H1 (cell line): ENCODE measurements at regions of chr4 and their contacts with region 1.

Region 1: GRCh38 chr4:53929955-53930798 is 134.2 kb downstream of the CHIC2 start:
- DNase-seq: peak; percentile 49 to 65
- H3K4me3 ChIP-seq: no peak overlapping the region
- H3K27ac ChIP-seq: no peak overlapping the region
- H3K4me1 ChIP-seq: no peaks in the 10 kb centered on the region
- H3K27me3 ChIP-seq: no peaks in the 10 kb centered on the region; a peak in 1 of 7 replicates
- CTCF ChIP-seq: peak; percentile 68 to 95 (median 83)
- EP300 ChIP-seq: no peak
- POLR2A ChIP-seq: no peak
- RAD21 ChIP-seq: peak; percentile 90 to 91

Region 2: DNA sequence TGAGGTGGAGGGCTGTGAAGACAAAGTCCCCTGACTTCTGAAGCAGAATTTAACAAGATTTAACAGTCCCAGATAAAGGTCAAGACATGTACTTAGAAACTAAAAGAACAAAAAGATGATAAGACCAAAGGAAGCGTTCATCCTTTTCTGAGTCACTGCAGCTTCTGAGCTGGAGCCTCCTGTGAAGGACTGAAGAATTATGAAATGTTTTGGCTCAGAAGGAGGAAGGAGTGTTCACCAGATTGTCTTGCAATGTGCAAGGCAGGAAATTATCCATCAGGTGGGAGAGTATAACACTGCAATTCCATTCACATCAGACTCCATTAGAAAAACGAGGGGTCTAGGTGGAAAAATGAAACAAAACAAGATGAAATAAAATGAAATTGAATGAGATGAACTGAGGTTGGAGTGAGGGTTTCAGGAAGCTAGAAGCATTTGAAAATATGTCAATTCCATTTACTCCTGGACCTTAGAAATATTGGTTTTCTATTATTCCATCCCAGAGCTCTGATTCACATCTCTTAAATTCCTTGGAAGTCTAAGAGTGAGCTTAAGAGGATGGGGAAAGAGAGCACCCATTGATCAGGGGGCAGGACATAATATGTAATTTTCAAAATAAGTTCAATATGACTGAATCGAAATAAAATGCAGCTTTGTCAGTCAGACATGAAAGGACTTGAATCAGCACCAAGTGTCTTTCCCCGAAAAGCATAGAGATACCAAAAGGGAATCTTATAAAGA is 152.8 kb before region 1 on chr4:
- CTCF ChIA-PET with region 1: no interaction called
- POLR2A ChIA-PET with region 1: no interaction called
- DNase-seq: no peak
- H3K4me3 ChIP-seq: no peak overlapping the region
- H3K27ac ChIP-seq: no peak overlapping the region
- H3K4me1 ChIP-seq: no peaks in the 10 kb centered on the region
- H3K27me3 ChIP-seq: peaks cover 0 to 1% (median 0%) of the 10 kb centered on the region in 4 experiments; a peak in 1 of 7 replicates
- CTCF ChIP-seq: no peak
- EP300 ChIP-seq: no peak
- POLR2A ChIP-seq: no peak
- RAD21 ChIP-seq: no peak

Region 3: GRCh38 chr4:53920116-53920515 is 10.1 kb before region 1 on chr4:
- CTCF ChIA-PET with region 1: interaction called, 34 read pairs
- POLR2A ChIA-PET with region 1: no interaction called
- DNase-seq: no peak
- H3K4me3 ChIP-seq: no peak overlapping the region
- H3K27ac ChIP-seq: no peak overlapping the region
- H3K4me1 ChIP-seq: peaks cover 0 to 15% (median under 1%) of the 10 kb centered on the region in 4 experiments; a peak in 4 of 7 replicates
- H3K27me3 ChIP-seq: no peaks in the 10 kb centered on the region
- CTCF ChIP-seq: no peak
- EP300 ChIP-seq: no peak
- POLR2A ChIP-seq: no peak
- RAD21 ChIP-seq: no peak

Region 4: DNA sequence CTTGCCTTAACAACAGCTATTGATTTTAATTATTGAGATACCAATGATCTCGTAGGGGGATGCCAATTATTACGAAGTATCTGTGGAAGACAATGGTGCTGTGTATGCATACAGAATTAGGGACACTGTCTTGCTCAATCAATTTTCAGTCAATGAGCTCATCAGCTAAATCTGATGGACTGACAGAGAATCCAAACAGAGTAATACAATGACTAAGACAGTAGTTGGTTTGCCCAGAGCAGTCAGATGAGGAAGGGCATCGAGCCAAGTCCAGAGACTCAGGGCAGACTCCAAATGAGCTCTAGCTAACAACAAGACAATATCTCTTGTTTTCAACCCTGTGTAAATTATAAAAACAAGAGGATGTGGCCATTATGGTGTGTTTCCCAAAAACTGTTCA is 155.1 kb after region 1 on chr4:
- CTCF ChIA-PET with region 1: interaction called, 12 read pairs
- POLR2A ChIA-PET with region 1: no interaction called
- DNase-seq: no peak
- H3K4me3 ChIP-seq: no peak overlapping the region
- H3K27ac ChIP-seq: no peak overlapping the region
- H3K4me1 ChIP-seq: no peaks in the 10 kb centered on the region
- H3K27me3 ChIP-seq: peaks cover 3 to 7% (median 4%) of the 10 kb centered on the region in 4 experiments; a peak in 6 of 7 replicates
- CTCF ChIP-seq: no peak
- EP300 ChIP-seq: no peak
- POLR2A ChIP-seq: no peak
- RAD21 ChIP-seq: no peak

Region 5: DNA sequence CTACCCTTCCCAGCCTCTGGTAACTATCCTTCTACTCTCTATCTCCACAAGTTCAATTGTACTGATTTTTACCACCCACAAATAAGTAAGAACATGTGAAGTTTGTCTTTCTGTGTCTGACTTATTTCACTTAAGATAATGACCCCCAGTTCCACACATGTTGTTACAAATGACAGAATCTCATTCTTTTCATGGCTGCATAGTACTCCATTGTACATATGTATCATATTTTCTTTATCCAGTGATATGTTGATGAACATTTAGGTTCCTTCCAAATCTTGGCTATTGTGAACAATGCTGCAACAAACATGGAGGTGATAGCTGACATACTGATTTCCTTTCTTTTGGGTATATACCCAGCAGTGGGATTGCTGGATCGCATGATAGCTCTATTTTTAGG is 197.5 kb after region 1 on chr4:
- CTCF ChIA-PET with region 1: no interaction called
- POLR2A ChIA-PET with region 1: no interaction called
- DNase-seq: no peak
- H3K4me3 ChIP-seq: no peak overlapping the region
- H3K27ac ChIP-seq: no peak overlapping the region
- H3K4me1 ChIP-seq: no peaks in the 10 kb centered on the region
- H3K27me3 ChIP-seq: no peaks in the 10 kb centered on the region
- CTCF ChIP-seq: no peak
- EP300 ChIP-seq: no peak
- POLR2A ChIP-seq: no peak
- RAD21 ChIP-seq: no peak

Region 6: DNA sequence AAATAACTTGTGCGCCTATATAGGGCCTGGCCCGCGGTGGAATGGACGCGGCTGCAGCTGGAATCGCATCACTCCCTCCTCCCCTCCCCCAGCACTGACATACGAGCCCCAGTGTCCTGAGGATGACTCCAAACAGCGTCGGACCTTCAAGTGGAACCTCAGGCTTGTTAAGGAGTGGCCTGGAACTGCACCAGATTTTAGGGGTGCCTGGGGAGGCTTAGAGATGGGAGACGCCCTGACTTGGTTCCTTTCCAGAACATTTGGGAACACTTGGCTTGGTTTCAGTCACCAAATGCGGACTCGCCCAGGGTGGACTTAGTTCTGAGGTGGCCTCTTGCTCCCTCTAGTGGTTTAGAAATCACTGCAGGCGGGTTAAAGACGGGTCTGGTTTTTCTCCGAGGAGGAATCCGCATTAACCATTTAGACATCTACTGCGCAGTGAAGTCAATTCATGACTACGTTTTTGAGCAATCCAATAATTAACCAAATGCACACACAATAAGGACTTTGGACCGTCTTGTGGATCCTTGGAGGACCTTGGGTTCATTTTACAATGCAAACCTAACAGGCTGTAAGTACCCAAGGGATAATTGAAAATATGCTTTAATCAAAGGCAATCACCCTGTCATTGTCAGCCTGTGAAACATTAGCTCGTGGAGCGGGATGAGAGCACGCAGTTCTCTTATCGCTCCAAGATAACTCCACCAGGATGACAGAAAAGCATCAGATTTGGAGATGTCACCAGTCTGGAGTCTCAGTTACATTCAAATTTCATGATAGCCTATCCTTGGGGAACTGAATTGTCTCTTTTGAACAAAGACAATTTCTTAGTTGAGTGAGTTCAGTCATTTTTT is 287.7 kb after region 1 on chr4:
- CTCF ChIA-PET with region 1: interaction called, 79 read pairs
- POLR2A ChIA-PET with region 1: no interaction called
- DNase-seq: peak in 1 of 2 experiments; percentile 81
- H3K4me3 ChIP-seq: peak overlapping the region; percentile 12 to 59 (median 42); a peak in 6 of 8 replicates
- H3K27ac ChIP-seq: no peak overlapping the region
- H3K4me1 ChIP-seq: no peaks in the 10 kb centered on the region
- H3K27me3 ChIP-seq: peaks cover 0 to 34% (median 18%) of the 10 kb centered on the region in 4 experiments; a peak in 6 of 7 replicates
- CTCF ChIP-seq: peak; percentile 58 to 86 (median 83)
- EP300 ChIP-seq: no peak
- POLR2A ChIP-seq: no peak
- RAD21 ChIP-seq: peak; percentile 90 to 93

Region 7: DNA sequence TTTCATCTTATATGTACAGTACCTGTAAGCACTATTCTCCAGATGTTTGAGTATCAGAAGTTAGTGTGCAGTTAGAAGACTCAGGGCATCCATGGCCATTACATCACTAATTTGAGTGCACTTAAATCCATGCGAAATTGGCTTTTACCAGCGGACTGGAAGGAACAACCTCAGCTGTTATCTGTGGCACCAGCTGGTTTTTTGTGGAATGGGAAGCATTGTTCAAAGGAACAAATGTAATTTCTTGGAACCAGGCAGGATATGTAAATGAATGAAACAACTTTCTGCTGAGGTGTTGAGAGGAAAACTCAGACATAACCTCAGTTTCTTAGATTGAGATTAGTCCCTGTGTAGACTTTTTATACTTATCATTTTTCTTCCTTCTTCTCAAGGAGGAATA is 359.1 kb after region 1 on chr4:
- CTCF ChIA-PET with region 1: no interaction called
- POLR2A ChIA-PET with region 1: no interaction called
- DNase-seq: no peak
- H3K4me3 ChIP-seq: no peak overlapping the region
- H3K27ac ChIP-seq: no peak overlapping the region
- H3K4me1 ChIP-seq: no peaks in the 10 kb centered on the region
- H3K27me3 ChIP-seq: no peaks in the 10 kb centered on the region
- CTCF ChIP-seq: no peak
- EP300 ChIP-seq: no peak
- POLR2A ChIP-seq: no peak
- RAD21 ChIP-seq: no peak